CD8-positive, alpha-beta T cell (primary cell): ENCODE measurements at regions of chrX and their contacts with region 1.

Region 1: GRCh38 chrX:38327007-38327774 is at the start of gene RPGR:
- DNase-seq: peak; percentile 81 to 95 (median 89)
- ATAC-seq: peak; percentile 98
- H3K4me3 ChIP-seq: peak within 1 kb of the TSS; percentile 69 to 76
- H3K4me3 Mint-ChIP-seq: peak within 1 kb of the TSS; percentile 93
- H3K27ac ChIP-seq: peak within 1 kb of the TSS; percentile 86 to 96
- H3K27ac Mint-ChIP-seq: peak within 1 kb of the TSS; percentile 90
- H3K4me1 ChIP-seq: peaks cover 13% of the 10 kb centered on the region
- H3K4me1 Mint-ChIP-seq: peaks cover 33% of the 10 kb centered on the region
- H3K27me3 ChIP-seq: no peaks in the 10 kb centered on the region
- H3K27me3 Mint-ChIP-seq: no peaks in the 10 kb centered on the region
- CTCF ChIP-seq: peak; percentile 55
- total RNA-seq, gene RPGR: 16.9 to 17.0 TPM

Region 2: GRCh38 chrX:37846934-37847732 is 480.1 kb before region 1 on chrX and contains the start of gene DYNLT3:
- CTCF ChIA-PET with region 1: no interaction called
- POLR2A ChIA-PET with region 1: no interaction called
- intact Hi-C with region 1: loop called (anchors 1 to 5 kb)
- DNase-seq: peak; percentile 59 to 91 (median 74)
- ATAC-seq: peak; percentile 90
- H3K4me3 ChIP-seq: peak within 1 kb of the TSS; percentile 75 to 84
- H3K4me3 Mint-ChIP-seq: peak within 1 kb of the TSS; percentile 86
- H3K27ac ChIP-seq: peak within 1 kb of the TSS; percentile 93 to 96
- H3K27ac Mint-ChIP-seq: peak within 1 kb of the TSS; percentile 97
- H3K4me1 ChIP-seq: peaks cover 7% of the 10 kb centered on the region
- H3K4me1 Mint-ChIP-seq: peaks cover 35% of the 10 kb centered on the region
- H3K27me3 ChIP-seq: no peaks in the 10 kb centered on the region
- H3K27me3 Mint-ChIP-seq: no peaks in the 10 kb centered on the region
- CTCF ChIP-seq: no peak
- total RNA-seq, gene DYNLT3: 44.3 to 45.6 TPM

Region 3: GRCh38 chrX:37926700-37927099 is 400.5 kb before region 1 on chrX:
- CTCF ChIA-PET with region 1: interaction called, 5 read pairs
- POLR2A ChIA-PET with region 1: no interaction called
- intact Hi-C with region 1: loop called in 1 of 2 experiments (anchors 10 kb)
- DNase-seq: peak in 2 of 9 experiments; percentile 18 to 29
- ATAC-seq: no peak
- H3K4me3 ChIP-seq: no peak overlapping the region
- H3K4me3 Mint-ChIP-seq: no peak overlapping the region
- H3K27ac ChIP-seq: no peak overlapping the region
- H3K27ac Mint-ChIP-seq: no peak overlapping the region
- H3K4me1 ChIP-seq: no peaks in the 10 kb centered on the region
- H3K4me1 Mint-ChIP-seq: no peaks in the 10 kb centered on the region
- H3K27me3 ChIP-seq: no peaks in the 10 kb centered on the region
- H3K27me3 Mint-ChIP-seq: peaks cover 10% of the 10 kb centered on the region
- CTCF ChIP-seq: peak; percentile 32

Region 4: GRCh38 chrX:38192007-38192810 is 135.0 kb before region 1 on chrX:
- CTCF ChIA-PET with region 1: no interaction called
- POLR2A ChIA-PET with region 1: no interaction called
- intact Hi-C with region 1: loop called in 1 of 2 experiments (anchors 1 kb)
- DNase-seq: peak in 2 of 9 experiments; percentile 2 to 3
- ATAC-seq: no peak
- H3K4me3 ChIP-seq: no peak overlapping the region
- H3K4me3 Mint-ChIP-seq: no peak overlapping the region
- H3K27ac ChIP-seq: no peak overlapping the region
- H3K27ac Mint-ChIP-seq: no peak overlapping the region
- H3K4me1 ChIP-seq: no peaks in the 10 kb centered on the region
- H3K4me1 Mint-ChIP-seq: no peaks in the 10 kb centered on the region
- H3K27me3 ChIP-seq: no peaks in the 10 kb centered on the region
- H3K27me3 Mint-ChIP-seq: peaks cover 10% of the 10 kb centered on the region
- CTCF ChIP-seq: no peak